ENCODE measurements at regions of chr22 and their contacts with region 1.

Region 1: GRCh38 chr22:40400159-40400558 is 29.8 kb downstream of the SGSM3 start:
- DNase-seq: peak in 6 of 9 experiments; percentile 46 to 76 (median 64)
- ATAC-seq: peak; percentile 22
- H3K4me3 ChIP-seq: no peak overlapping the region
- H3K4me3 Mint-ChIP-seq: peak overlapping the region; percentile 66
- H3K27ac ChIP-seq: peak overlapping the region in 1 of 2 experiments; percentile 7
- H3K27ac Mint-ChIP-seq: peak overlapping the region; percentile 90
- H3K4me1 ChIP-seq: peaks cover 78% of the 10 kb centered on the region
- H3K4me1 Mint-ChIP-seq: peaks cover 78% of the 10 kb centered on the region
- H3K27me3 ChIP-seq: no peaks in the 10 kb centered on the region
- H3K27me3 Mint-ChIP-seq: no peaks in the 10 kb centered on the region
- CTCF ChIP-seq: no peak

Region 2: GRCh38 chr22:40107851-40108378 is 292.2 kb before region 1 on chr22:
- CTCF ChIA-PET with region 1: no interaction called
- POLR2A ChIA-PET with region 1: no interaction called
- intact Hi-C with region 1: no loop called
- DNase-seq: peak in 2 of 9 experiments; percentile 12 to 26
- ATAC-seq: peak; percentile 41
- H3K4me3 ChIP-seq: peak overlapping the region; percentile 10 to 13
- H3K4me3 Mint-ChIP-seq: peak overlapping the region; percentile 79
- H3K27ac ChIP-seq: peak overlapping the region in 1 of 2 experiments; percentile 55
- H3K27ac Mint-ChIP-seq: peak overlapping the region; percentile 76
- H3K4me1 ChIP-seq: peaks cover 67% of the 10 kb centered on the region
- H3K4me1 Mint-ChIP-seq: peaks cover 87% of the 10 kb centered on the region
- H3K27me3 ChIP-seq: no peaks in the 10 kb centered on the region
- H3K27me3 Mint-ChIP-seq: no peaks in the 10 kb centered on the region
- CTCF ChIP-seq: no peak

Region 3: GRCh38 chr22:40368836-40369235 is 31.3 kb before region 1 on chr22:
- CTCF ChIA-PET with region 1: no interaction called
- POLR2A ChIA-PET with region 1: interaction called, 11 read pairs
- intact Hi-C with region 1: loop called (anchors 1 to 2 kb)
- DNase-seq: no peak
- ATAC-seq: no peak
- H3K4me3 ChIP-seq: no peak overlapping the region
- H3K4me3 Mint-ChIP-seq: no peak overlapping the region
- H3K27ac ChIP-seq: no peak overlapping the region
- H3K27ac Mint-ChIP-seq: no peak overlapping the region
- H3K4me1 ChIP-seq: peaks cover 21% of the 10 kb centered on the region
- H3K4me1 Mint-ChIP-seq: peaks cover 22% of the 10 kb centered on the region
- H3K27me3 ChIP-seq: no peaks in the 10 kb centered on the region
- H3K27me3 Mint-ChIP-seq: no peaks in the 10 kb centered on the region
- CTCF ChIP-seq: no peak

Region 4: DNA sequence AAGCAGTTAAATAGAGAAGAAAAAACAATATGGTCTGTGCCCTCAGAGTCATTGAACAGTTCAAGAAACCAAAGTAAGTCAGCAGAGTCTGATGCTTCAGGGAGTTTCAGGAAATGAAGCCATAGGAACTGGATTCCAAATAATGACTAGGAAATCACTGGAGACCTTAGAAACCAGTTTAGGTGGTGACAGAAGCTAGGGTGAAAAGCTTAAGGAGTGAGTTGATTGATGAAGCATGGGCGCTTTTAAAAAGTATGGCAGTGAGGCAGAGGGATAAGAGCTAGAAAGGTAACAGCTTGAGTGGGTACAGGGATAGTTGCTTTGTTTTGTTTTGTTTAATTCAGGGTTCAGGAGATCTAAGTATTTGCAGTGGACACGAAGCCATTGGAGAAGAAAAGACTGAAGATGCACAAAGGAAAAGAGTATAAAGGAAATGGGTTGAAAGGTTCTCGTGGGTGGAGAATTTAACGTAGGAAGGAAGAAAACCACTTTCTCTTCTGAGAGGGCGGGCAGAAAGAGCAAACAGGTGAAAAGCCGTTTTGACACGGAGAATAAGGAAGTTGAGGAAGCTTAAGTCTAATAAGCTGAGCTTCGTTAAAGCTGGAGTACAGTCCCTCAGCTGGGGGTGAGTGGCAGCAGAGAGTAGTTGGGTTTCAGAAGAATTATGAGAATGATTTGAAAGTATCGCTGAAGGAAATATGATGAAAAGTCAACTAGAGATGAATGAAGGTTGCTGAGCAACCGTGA is 14.9 kb before region 1 on chr22:
- CTCF ChIA-PET with region 1: interaction called, 10 read pairs
- POLR2A ChIA-PET with region 1: interaction called, 14 read pairs
- intact Hi-C with region 1: loop called (anchors 1 to 2 kb)
- DNase-seq: peak in 5 of 9 experiments; percentile 29 to 78 (median 56)
- ATAC-seq: peak; percentile 95
- H3K4me3 ChIP-seq: peak overlapping the region; percentile 28 to 38
- H3K4me3 Mint-ChIP-seq: peak overlapping the region; percentile 85
- H3K27ac ChIP-seq: peak overlapping the region; percentile 52 to 79
- H3K27ac Mint-ChIP-seq: peak overlapping the region; percentile 96
- H3K4me1 ChIP-seq: peaks cover 51% of the 10 kb centered on the region
- H3K4me1 Mint-ChIP-seq: peaks cover 63% of the 10 kb centered on the region
- H3K27me3 ChIP-seq: no peaks in the 10 kb centered on the region
- H3K27me3 Mint-ChIP-seq: no peaks in the 10 kb centered on the region
- CTCF ChIP-seq: no peak

Region 5: DNA sequence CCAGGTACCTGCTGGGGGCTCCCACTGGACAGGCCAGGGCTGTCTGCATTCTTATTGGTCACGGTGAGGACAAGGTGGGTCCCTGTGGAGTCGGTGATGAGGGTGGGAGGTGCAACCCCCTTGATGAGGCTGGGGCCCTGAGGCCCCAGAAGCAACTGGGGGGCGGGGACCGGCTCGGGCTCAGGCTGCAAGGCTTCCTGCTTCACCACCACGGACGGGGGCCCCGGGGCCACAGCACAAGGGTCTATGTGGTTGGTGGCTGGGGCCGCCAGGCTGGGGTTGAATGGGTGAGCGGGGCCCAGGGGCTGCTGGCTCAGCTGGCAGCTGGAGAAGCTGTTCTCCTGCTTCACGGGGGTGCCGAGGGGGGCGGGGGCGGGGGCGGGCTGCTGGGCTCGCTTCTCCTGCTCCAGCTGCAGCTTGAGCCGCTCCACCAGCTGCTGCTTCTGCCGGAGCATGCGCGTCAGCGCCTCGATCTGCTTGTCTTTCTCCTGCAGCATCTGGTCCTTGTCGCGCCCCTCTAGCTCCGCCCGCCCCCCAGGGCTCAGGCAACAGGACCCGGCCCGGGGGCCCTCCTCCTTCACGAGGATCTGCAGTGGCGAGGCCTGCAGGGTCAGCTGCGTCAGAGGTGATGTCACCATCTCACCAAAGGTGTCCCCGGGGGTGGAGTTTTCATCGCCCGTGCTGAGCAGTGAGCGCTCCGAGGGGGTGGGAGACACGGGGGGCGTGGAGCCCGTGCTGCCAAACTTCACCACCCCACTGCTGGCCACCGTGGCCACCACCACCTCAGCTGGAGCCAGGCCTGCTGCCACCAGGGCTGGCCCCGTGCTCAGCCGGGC is 18.4 kb after region 1 on chr22:
- CTCF ChIA-PET with region 1: interaction called, 3 read pairs
- POLR2A ChIA-PET with region 1: interaction called, 4 read pairs
- intact Hi-C with region 1: loop called in 1 of 2 experiments (anchors 2 kb)
- DNase-seq: peak in 5 of 9 experiments; percentile 23 to 90 (median 70)
- ATAC-seq: peak; percentile 94
- H3K4me3 ChIP-seq: no peak overlapping the region
- H3K4me3 Mint-ChIP-seq: no peak overlapping the region
- H3K27ac ChIP-seq: no peak overlapping the region
- H3K27ac Mint-ChIP-seq: peak overlapping the region; percentile 60
- H3K4me1 ChIP-seq: peaks cover 43% of the 10 kb centered on the region
- H3K4me1 Mint-ChIP-seq: peaks cover 55% of the 10 kb centered on the region
- H3K27me3 ChIP-seq: no peaks in the 10 kb centered on the region
- H3K27me3 Mint-ChIP-seq: no peaks in the 10 kb centered on the region
- CTCF ChIP-seq: no peak